PC-9 (cell line): ENCODE measurements at regions of chr20 and their contacts with region 1.

Region 1: DNA sequence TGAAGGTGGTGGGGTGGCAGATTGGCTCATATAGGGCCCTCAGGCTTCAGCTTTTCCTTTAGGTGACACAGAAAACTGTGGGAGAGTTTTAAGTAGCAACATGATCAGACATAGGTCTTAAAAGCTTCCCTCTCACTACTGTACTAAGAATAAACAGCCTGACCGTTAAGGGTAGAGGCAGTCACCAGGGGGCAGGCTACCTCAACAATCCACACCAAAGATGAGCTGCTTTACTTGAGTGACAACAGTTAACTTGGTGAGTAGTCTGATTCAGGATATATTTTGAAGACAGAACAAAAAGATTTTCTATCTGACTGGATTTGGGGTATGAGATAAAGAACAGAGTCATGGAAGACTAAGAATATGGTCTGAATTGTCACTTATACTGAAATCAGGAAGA is 193.1 kb upstream of the SHLD1 start:
- DNase-seq: peak; percentile 42 to 48
- H3K4me3 ChIP-seq: no peak overlapping the region
- H3K27ac ChIP-seq: no peak overlapping the region
- H3K4me1 ChIP-seq: no peaks in the 10 kb centered on the region
- H3K27me3 ChIP-seq: no peaks in the 10 kb centered on the region
- CTCF ChIP-seq: peak; percentile 78

Region 2: GRCh38 chr20:5504061-5504739 is 52.9 kb before region 1 on chr20:
- CTCF ChIA-PET with region 1: no interaction called
- POLR2A ChIA-PET with region 1: no interaction called
- intact Hi-C with region 1: no loop called
- DNase-seq: no peak
- H3K4me3 ChIP-seq: no peak overlapping the region
- H3K27ac ChIP-seq: no peak overlapping the region
- H3K4me1 ChIP-seq: no peaks in the 10 kb centered on the region
- H3K27me3 ChIP-seq: peaks cover 63% of the 10 kb centered on the region
- CTCF ChIP-seq: no peak

Region 3: DNA sequence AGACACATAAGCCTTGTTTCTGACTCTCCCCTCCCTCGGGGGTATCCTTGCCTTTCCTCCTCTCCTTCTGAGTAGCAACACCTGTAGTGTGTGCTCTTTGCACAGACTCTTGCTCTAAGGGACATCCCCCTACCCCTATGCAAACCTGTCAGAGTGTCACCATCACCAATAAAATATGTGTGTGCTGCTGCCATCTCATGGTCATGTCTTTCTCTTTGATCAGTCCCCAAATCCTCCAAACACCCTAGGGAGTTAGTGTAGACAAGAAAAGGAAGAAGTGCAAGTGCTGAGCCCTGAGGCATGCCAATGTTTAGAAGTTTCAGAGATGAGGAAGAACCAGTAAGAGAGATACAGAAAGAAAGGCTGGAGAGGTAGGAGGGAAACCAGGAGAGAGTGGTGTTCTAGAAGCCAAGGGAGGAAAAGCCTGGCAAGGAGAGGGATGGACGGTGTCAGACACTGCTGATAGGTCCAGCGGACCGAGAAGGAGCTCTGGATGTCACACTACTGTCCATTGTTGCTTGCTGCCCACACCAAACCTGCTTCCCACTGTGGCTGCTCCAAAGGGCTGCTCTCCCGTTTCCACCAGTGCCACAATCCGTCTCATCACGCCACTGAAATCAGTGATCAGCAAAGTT is 376.8 kb after region 1 on chr20:
- CTCF ChIA-PET with region 1: no interaction called
- POLR2A ChIA-PET with region 1: no interaction called
- intact Hi-C with region 1: loop called (anchors 10 kb)
- DNase-seq: no peak
- H3K4me3 ChIP-seq: no peak overlapping the region
- H3K27ac ChIP-seq: no peak overlapping the region
- H3K4me1 ChIP-seq: no peaks in the 10 kb centered on the region
- H3K27me3 ChIP-seq: peaks cover 19% of the 10 kb centered on the region; the same call in 1 of the 2 replicates
- CTCF ChIP-seq: peak; percentile 55